ENCODE measurements at regions of chr16 and their contacts with region 1.

Region 1: GRCh38 chr16:3123986-3124886 is 10.6 kb upstream of the ZNF213 start:
- DNase-seq: peak; percentile 93 to 98 (median 96)
- ATAC-seq: peak; percentile 89
- H3K4me3 ChIP-seq: peak overlapping the region; percentile 77
- H3K4me3 Mint-ChIP-seq: peak overlapping the region; percentile 98
- H3K27ac ChIP-seq: peak overlapping the region; percentile 70 to 71
- H3K27ac Mint-ChIP-seq: peak overlapping the region; percentile 92
- H3K4me1 ChIP-seq: peaks cover 37% of the 10 kb centered on the region
- H3K4me1 Mint-ChIP-seq: peaks cover 49% of the 10 kb centered on the region
- H3K27me3 ChIP-seq: no peaks in the 10 kb centered on the region
- H3K27me3 Mint-ChIP-seq: no peaks in the 10 kb centered on the region
- CTCF ChIP-seq: peak; percentile 41

Region 2: GRCh38 chr16:3065069-3065741 is 59.0 kb before region 1 on chr16 and contains the start of gene IL32:
- CTCF ChIA-PET with region 1: interaction called, 62 read pairs
- POLR2A ChIA-PET with region 1: interaction called, 70 read pairs
- intact Hi-C with region 1: no loop called
- DNase-seq: peak; percentile 46 to 88 (median 68)
- ATAC-seq: peak; percentile 65
- H3K4me3 ChIP-seq: peak within 1 kb of the TSS; percentile 99
- H3K4me3 Mint-ChIP-seq: peak within 1 kb of the TSS; percentile 99
- H3K27ac ChIP-seq: peak within 1 kb of the TSS; percentile 85 to 98
- H3K27ac Mint-ChIP-seq: peak within 1 kb of the TSS; percentile 97
- H3K4me1 ChIP-seq: peaks cover 78% of the 10 kb centered on the region
- H3K4me1 Mint-ChIP-seq: peaks cover 67% of the 10 kb centered on the region
- H3K27me3 ChIP-seq: no peaks in the 10 kb centered on the region
- H3K27me3 Mint-ChIP-seq: no peaks in the 10 kb centered on the region
- CTCF ChIP-seq: no peak
- total RNA-seq, gene IL32: 378 to 383 TPM

Region 3: GRCh38 chr16:3106205-3106928 is 17.9 kb before region 1 on chr16:
- CTCF ChIA-PET with region 1: interaction called, 28 read pairs
- POLR2A ChIA-PET with region 1: interaction called, 6 read pairs
- intact Hi-C with region 1: loop called in 1 of 2 experiments (anchors 1 kb)
- DNase-seq: peak; percentile 79 to 95 (median 87)
- ATAC-seq: peak; percentile 85
- H3K4me3 ChIP-seq: peak overlapping the region; percentile 82
- H3K4me3 Mint-ChIP-seq: peak overlapping the region; percentile 93
- H3K27ac ChIP-seq: peak overlapping the region; percentile 83 to 85
- H3K27ac Mint-ChIP-seq: peak overlapping the region; percentile 76
- H3K4me1 ChIP-seq: peaks cover 27% of the 10 kb centered on the region
- H3K4me1 Mint-ChIP-seq: peaks cover 42% of the 10 kb centered on the region
- H3K27me3 ChIP-seq: no peaks in the 10 kb centered on the region
- H3K27me3 Mint-ChIP-seq: no peaks in the 10 kb centered on the region
- CTCF ChIP-seq: no peak

Region 4: DNA sequence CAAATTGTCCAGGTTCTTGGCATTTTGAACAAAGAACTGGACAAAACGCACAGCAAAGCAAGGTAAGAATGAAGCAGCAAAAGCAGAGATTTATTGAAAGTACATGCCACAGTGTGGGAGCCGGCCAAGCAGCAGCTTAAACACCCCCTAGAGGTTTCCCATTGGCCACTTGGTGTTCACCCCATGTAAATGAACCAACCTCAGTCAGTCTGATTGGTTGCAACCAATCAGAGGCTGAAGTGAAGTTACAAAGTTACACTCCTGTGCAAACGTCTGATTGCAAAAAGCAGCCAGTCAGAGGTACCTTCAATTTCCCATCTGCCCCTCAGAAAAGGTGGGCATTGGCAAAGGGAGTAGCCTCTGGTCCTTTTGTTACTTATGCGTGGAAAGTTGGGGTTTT is 150.3 kb after region 1 on chr16:
- CTCF ChIA-PET with region 1: no interaction called
- POLR2A ChIA-PET with region 1: no interaction called
- intact Hi-C with region 1: no loop called
- DNase-seq: no peak
- ATAC-seq: no peak
- H3K4me3 ChIP-seq: no peak overlapping the region
- H3K4me3 Mint-ChIP-seq: no peak overlapping the region
- H3K27ac ChIP-seq: no peak overlapping the region
- H3K27ac Mint-ChIP-seq: no peak overlapping the region
- H3K4me1 ChIP-seq: no peaks in the 10 kb centered on the region
- H3K4me1 Mint-ChIP-seq: no peaks in the 10 kb centered on the region
- H3K27me3 ChIP-seq: no peaks in the 10 kb centered on the region
- H3K27me3 Mint-ChIP-seq: no peaks in the 10 kb centered on the region
- CTCF ChIP-seq: no peak